ENCODE measurements at regions of chr20 and their contacts with region 1.

Region 1: GRCh38 chr20:33697129-33697528 is 10.9 kb upstream of the E2F1 start:
- DNase-seq: no peak
- H3K4me3 ChIP-seq: no peak overlapping the region
- H3K27ac ChIP-seq: no peak overlapping the region
- H3K4me1 ChIP-seq: peaks cover 0 to 16% (median 9%) of the 10 kb centered on the region in 4 experiments; a peak in 6 of 7 replicates
- H3K27me3 ChIP-seq: 0 out of 7 replicates have a peak, but pooled peaks cover 0 to under 1% (median 0%) of the 10 kb centered on the region in 4 experiments
- CTCF ChIP-seq: no peak
- EP300 ChIP-seq: no peak
- POLR2A ChIP-seq: no peak
- RAD21 ChIP-seq: no peak

Region 2: GRCh38 chr20:33477386-33478234 is 219.5 kb before region 1 on chr20:
- CTCF ChIA-PET with region 1: no interaction called
- POLR2A ChIA-PET with region 1: no interaction called
- DNase-seq: no peak
- H3K4me3 ChIP-seq: no peak overlapping the region
- H3K27ac ChIP-seq: no peak overlapping the region
- H3K4me1 ChIP-seq: peaks cover 3 to 18% (median 10%) of the 10 kb centered on the region in 4 experiments
- H3K27me3 ChIP-seq: no peaks in the 10 kb centered on the region
- CTCF ChIP-seq: no peak
- EP300 ChIP-seq: no peak
- POLR2A ChIP-seq: no peak
- RAD21 ChIP-seq: no peak

Region 3: DNA sequence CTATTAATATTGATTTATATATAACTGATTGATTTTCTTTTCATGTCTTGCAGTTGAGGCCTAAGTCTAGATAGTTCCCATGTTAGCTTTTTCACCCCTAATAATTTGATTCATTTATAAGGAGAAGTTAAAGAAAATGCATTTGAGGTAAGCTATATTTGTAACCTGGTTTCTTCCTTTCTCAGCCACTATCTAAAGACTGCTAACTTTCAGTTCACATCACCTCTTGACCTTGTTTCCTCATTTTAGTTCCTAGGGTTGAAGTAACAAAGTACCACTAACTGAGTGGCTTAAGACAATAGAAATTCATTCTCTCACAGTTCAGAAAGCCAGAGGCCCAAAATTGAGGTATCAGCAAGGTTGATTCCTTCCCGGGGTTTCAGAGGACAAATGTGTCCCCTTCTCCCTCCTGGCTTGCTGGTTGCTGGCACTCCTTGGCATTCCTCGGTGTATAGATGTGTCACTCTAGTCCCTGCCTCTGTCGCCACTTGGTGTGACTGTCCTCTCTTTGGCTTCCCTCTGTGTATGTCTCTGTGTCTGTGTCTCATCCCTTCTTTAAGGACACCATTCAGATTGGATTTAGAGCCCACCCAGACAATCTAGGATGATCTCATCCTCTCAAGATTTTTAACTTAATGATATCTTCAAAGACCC is 90.9 kb before region 1 on chr20:
- CTCF ChIA-PET with region 1: no interaction called
- POLR2A ChIA-PET with region 1: no interaction called
- DNase-seq: no peak
- H3K4me3 ChIP-seq: no peak overlapping the region
- H3K27ac ChIP-seq: no peak overlapping the region
- H3K4me1 ChIP-seq: no peaks in the 10 kb centered on the region
- H3K27me3 ChIP-seq: no peaks in the 10 kb centered on the region
- CTCF ChIP-seq: no peak
- EP300 ChIP-seq: no peak
- POLR2A ChIP-seq: no peak
- RAD21 ChIP-seq: no peak

Region 4: DNA sequence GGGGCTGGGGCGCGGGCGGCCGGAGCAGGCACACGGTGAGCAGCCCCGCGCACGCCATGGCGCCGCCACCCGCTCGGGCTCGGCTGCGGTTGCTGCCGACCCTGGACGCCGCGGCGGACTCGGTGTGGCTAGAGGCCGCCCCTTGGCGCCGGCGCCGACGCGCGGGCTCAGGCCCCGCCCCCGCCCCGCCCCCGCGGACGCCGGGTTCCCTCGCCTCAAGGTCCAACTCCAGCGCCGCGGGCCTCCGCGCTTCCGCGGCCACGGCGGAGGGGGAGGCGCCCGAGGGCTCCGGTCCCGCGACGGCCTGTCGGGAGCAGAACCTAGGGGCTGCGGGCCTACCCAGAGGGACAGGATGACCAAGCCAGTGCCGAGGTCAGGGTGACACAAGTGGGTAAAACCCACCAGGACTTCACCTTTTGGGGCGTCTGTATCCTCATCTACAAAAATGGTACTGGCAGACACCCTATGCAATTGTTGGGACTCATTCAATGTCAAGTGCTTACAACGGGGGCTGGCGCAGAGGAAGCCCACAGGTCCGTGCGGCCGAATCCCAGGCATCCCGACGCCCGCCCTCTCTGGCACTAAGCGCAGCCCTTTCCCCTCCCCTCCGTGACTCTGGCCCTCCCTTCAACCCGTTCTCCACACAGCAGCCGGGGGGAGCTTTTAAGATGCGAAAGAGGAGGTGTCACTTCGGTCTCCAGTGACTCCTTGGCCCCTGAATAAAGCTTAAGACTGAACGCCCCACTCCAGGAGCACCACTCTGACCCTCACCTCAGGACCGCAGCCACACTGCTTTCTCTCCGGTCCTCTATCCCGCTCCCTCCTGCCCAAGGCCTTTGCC is 22.6 kb before region 1 on chr20 and contains the start of gene NECAB3:
- CTCF ChIA-PET with region 1: interaction called, 5 read pairs
- POLR2A ChIA-PET with region 1: interaction called, 10 read pairs
- DNase-seq: peak in 1 of 2 experiments; percentile 87
- H3K4me3 ChIP-seq: peak within 1 kb of the TSS; percentile 52 to 77 (median 70)
- H3K27ac ChIP-seq: no peak within 1 kb of the TSS; the same call in 1 of the 2 replicates
- H3K4me1 ChIP-seq: peaks cover 0 to 22% (median 11%) of the 10 kb centered on the region in 4 experiments; a peak in 4 of 7 replicates
- H3K27me3 ChIP-seq: no peaks in the 10 kb centered on the region
- CTCF ChIP-seq: no peak
- EP300 ChIP-seq: no peak
- POLR2A ChIP-seq: peak; percentile 4 to 31
- RAD21 ChIP-seq: no peak
- total RNA-seq, gene NECAB3: 19.7 and 20.5 TPM in 2 replicates

Region 5: GRCh38 chr20:33686100-33686983 is 10.8 kb before region 1 on chr20 and contains the start of gene E2F1:
- CTCF ChIA-PET with region 1: interaction called, 8 read pairs
- POLR2A ChIA-PET with region 1: interaction called, 11 read pairs
- DNase-seq: peak in 1 of 2 experiments; percentile 97
- H3K4me3 ChIP-seq: peak within 1 kb of the TSS; percentile 86 to 97 (median 94)
- H3K27ac ChIP-seq: peak within 1 kb of the TSS; percentile 64
- H3K4me1 ChIP-seq: peaks cover 4 to 25% (median 15%) of the 10 kb centered on the region in 4 experiments
- H3K27me3 ChIP-seq: peaks cover 0 to 9% (median 2%) of the 10 kb centered on the region in 4 experiments; a peak in 4 of 7 replicates
- CTCF ChIP-seq: peak in 1 of 3 experiments; percentile 34; a peak in 2 of 4 replicates
- EP300 ChIP-seq: no peak
- POLR2A ChIP-seq: peak; percentile 60 to 69
- RAD21 ChIP-seq: peak in 1 of 2 experiments; percentile 2; a peak in 1 of 4 replicates
- total RNA-seq, gene E2F1: 35.3 and 35.8 TPM in 2 replicates

Region 6: DNA sequence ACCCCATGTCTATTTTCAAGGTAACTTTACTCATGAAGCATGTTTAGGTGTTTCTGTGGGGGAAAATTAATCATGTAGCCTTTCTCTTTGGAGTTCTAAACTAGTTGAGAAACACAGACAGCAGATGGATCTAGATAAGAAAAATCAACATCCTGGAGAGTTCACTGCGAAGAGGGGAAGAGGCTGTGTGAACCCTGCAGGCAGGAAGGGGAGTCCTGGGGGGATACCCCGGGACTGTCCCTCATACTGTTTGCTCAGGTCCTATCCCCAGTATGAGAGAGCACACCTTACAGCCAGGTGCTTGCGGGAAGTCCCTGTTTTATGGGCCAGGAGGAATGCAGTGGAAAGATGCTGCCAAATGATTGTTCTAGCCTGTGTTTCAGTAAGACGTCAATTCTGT is 146.7 kb after region 1 on chr20:
- CTCF ChIA-PET with region 1: no interaction called
- POLR2A ChIA-PET with region 1: no interaction called
- DNase-seq: no peak
- H3K4me3 ChIP-seq: no peak overlapping the region
- H3K27ac ChIP-seq: no peak overlapping the region
- H3K4me1 ChIP-seq: peaks cover 10 to 23% (median 19%) of the 10 kb centered on the region in 4 experiments
- H3K27me3 ChIP-seq: no peaks in the 10 kb centered on the region
- CTCF ChIP-seq: no peak
- EP300 ChIP-seq: no peak
- POLR2A ChIP-seq: no peak
- RAD21 ChIP-seq: no peak